MCF 10A (cell line): ENCODE measurements at regions of chr12 and their contacts with region 1.

Region 1: GRCh38 chr12:48414021-48414420 is 58.3 kb upstream of the ANP32D start:
- DNase-seq: no peak
- H3K4me3 Mint-ChIP-seq: no peak overlapping the region
- H3K27ac Mint-ChIP-seq: no peak overlapping the region
- H3K4me1 Mint-ChIP-seq: no peaks in the 10 kb centered on the region
- H3K27me3 Mint-ChIP-seq: peaks cover 57% of the 10 kb centered on the region
- CTCF ChIP-seq: no peak

Region 2: GRCh38 chr12:47812797-47813510 is 601.1 kb before region 1 on chr12:
- CTCF ChIA-PET with region 1: no interaction called
- POLR2A ChIA-PET with region 1: no interaction called
- intact Hi-C with region 1: no loop called
- DNase-seq: peak; percentile 85
- H3K4me3 Mint-ChIP-seq: peak overlapping the region; percentile 68
- H3K27ac Mint-ChIP-seq: peak overlapping the region; percentile 85
- H3K4me1 Mint-ChIP-seq: peaks cover 75% of the 10 kb centered on the region
- H3K27me3 Mint-ChIP-seq: no peaks in the 10 kb centered on the region
- CTCF ChIP-seq: no peak

Region 3: DNA sequence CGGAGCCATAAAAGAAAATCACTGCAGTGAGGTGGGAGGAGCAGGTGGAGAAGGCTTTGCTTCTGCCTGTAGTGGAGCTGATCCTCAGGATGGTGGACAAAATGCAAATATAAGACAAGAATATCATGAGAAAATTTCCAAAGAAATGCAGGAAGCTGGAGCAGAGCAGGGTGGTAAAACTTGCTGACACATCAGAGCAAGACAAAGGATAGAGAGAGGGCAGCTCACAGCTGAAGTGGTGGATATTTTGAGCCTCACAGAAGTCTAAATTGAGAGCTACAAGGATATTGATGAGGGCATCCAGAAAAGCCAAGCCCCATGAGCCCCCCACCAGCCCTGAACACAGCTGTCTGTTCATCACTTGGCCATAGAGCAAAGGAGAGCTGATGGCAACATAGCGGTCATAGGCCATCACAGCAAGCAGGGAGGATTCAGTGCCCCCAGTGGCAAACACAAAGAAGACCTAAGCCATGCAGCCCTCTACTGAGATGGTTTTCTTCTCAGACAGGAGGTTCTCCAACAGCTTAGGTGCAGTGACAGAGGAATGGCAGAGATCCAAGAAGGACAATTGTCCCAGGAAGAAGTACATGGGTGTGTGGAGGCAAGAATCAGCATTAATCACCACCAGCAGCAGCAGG is 28.3 kb after region 1 on chr12:
- CTCF ChIA-PET with region 1: no interaction called
- POLR2A ChIA-PET with region 1: no interaction called
- intact Hi-C with region 1: no loop called
- DNase-seq: no peak
- H3K4me3 Mint-ChIP-seq: no peak overlapping the region
- H3K27ac Mint-ChIP-seq: no peak overlapping the region
- H3K4me1 Mint-ChIP-seq: no peaks in the 10 kb centered on the region
- H3K27me3 Mint-ChIP-seq: peaks cover 36% of the 10 kb centered on the region
- CTCF ChIP-seq: no peak

Region 4: DNA sequence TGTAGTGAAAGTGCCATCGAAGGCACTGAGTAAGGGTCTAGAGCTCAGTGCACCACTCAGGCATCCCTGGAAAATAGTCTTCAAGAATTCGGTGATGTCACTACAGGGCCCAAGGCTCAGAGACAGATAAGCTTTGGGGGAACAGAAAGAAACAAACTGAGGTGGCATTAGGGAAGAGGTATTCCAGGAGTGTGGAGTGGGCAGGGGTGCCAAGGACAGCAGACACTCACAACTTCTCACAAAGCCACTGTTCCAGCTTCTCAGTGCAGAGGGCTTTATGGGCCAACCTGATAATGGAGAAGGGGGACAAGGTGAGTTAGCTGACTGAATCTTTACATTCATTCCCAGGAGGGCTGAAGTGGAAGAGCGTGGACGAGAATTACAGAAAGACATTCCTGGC is 153.7 kb after region 1 on chr12:
- CTCF ChIA-PET with region 1: no interaction called
- POLR2A ChIA-PET with region 1: no interaction called
- intact Hi-C with region 1: loop called (anchors 10 kb)
- DNase-seq: no peak
- H3K4me3 Mint-ChIP-seq: no peak overlapping the region
- H3K27ac Mint-ChIP-seq: no peak overlapping the region
- H3K4me1 Mint-ChIP-seq: no peaks in the 10 kb centered on the region
- H3K27me3 Mint-ChIP-seq: peaks cover 51% of the 10 kb centered on the region
- CTCF ChIP-seq: no peak